Cardiac septum (tissue), 1 donor: ENCODE measurements at regions of chr9 and their contacts with region 1.

Region 1: DNA sequence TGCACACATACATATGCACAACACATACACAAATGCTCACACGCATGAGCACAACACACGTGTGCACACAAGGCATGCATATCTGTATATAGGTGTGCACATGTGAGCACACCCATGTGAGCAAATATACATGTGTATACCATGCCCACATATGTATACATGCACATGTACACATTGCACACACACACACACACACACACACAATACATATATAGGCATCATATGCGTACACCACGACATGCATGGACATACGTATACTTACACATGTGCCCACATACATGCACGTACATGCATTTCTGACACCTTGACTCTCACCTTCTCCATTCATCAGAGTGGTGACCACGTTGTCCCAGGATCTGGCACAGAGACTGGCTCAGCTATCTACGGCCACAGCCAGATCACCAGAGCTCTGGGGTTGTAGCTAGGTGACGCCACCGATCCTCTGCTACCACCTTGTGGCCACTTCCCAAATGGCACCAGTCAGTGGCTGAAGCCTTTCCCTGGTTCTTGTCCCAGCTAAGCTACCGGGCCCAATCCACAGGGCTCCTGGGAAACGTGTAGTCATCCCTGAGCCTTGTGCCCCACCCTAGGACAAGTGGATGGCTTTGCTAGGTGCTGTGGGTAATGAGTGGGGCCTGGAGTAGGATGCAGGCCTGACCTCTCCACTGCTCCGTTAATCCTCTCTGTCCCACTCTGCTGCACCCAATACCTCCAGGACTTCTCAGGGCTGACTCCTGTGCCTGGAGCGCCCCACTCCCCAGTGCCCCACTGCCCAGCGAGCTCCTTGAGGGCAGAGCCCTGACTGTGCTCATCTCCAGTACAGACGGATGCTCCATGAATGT is 194.4 kb downstream of the RGS3 start:
- DNase-seq: peak; percentile 93

Region 2: DNA sequence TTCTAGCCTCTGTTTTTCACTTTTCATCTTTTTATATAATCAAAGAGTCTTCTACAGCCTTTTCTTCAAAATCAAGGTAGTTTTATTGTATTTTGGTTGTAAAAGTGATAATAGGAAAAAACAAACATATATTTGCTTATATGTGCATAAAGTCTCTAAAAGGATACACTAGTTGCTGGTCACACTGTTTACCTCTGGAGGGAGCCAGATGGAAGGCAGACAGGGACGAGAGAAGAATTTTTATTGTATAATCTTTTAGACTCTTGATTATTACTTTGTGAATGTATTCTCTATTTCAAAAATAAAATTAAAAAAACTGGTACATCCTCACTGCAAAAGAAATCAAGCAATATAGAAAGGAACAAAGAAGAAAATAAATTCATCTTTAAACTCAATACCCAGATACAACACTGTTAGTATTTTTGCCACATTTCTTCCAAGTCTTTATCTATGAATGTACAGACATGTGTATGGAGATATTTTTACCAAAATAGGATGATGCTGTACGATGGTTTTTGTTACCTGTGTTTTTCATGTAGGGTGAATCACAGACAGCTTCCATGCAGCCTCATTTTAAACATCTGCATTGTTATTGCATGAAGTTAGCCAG is 348.6 kb before region 1 on chr9:
- intact Hi-C with region 1: loop called (anchors 5 kb)
- DNase-seq: no peak

Region 3: DNA sequence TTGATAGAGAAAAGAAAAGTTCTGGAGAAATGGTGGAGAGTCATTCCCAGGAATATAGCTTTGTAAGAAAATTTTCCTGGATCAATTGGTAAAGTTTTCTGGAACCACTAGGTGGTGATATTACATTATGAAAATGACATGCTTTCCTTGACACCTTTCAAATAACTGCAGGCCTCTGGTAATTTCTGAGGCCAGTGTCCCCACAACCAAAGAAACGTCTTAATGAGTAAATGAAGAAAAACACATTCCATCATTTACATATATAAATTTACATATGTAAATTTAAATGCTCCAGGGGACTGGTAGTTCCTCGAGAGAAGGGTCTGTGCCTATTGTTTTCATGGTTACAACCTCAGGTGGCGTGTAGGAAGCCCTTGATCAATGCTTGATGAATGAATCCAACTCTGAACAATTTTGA is 211.6 kb before region 1 on chr9:
- intact Hi-C with region 1: loop called (anchors 1 kb)
- DNase-seq: no peak

Region 4: GRCh38 chr9:113591001-113591898 is 66.7 kb before region 1 on chr9:
- intact Hi-C with region 1: loop called (anchors 1 kb)
- DNase-seq: peak; percentile 88

Region 5: GRCh38 chr9:113737517-113738271 is 79.8 kb after region 1 on chr9:
- intact Hi-C with region 1: no loop called
- DNase-seq: no peak